OCI-LY7 (cell line): ENCODE measurements at regions of chr1 and their contacts with region 1.

Region 1: GRCh38 chr1:217048104-217048721 is 325.0 kb upstream of the ESRRG start:
- DNase-seq: peak; percentile 16
- H3K4me3 ChIP-seq: no peak overlapping the region
- H3K27ac ChIP-seq: no peak overlapping the region
- H3K4me1 ChIP-seq: no peaks in the 10 kb centered on the region
- CTCF ChIP-seq: peak; percentile 59

Region 2: GRCh38 chr1:217181756-217182155 is 133.5 kb after region 1 on chr1:
- CTCF ChIA-PET with region 1: no interaction called
- POLR2A ChIA-PET with region 1: no interaction called
- intact Hi-C with region 1: no loop called
- DNase-seq: no peak
- H3K4me3 ChIP-seq: no peak overlapping the region
- H3K27ac ChIP-seq: no peak overlapping the region
- H3K4me1 ChIP-seq: no peaks in the 10 kb centered on the region
- CTCF ChIP-seq: no peak

Region 3: GRCh38 chr1:217660353-217661062 is 612.3 kb after region 1 on chr1:
- CTCF ChIA-PET with region 1: no interaction called
- POLR2A ChIA-PET with region 1: no interaction called
- intact Hi-C with region 1: loop called (anchors 10 kb)
- DNase-seq: peak; percentile 10
- H3K4me3 ChIP-seq: no peak overlapping the region
- H3K27ac ChIP-seq: no peak overlapping the region
- H3K4me1 ChIP-seq: no peaks in the 10 kb centered on the region
- CTCF ChIP-seq: peak; percentile 70